Lower leg skin (tissue), 4 donors: ENCODE measurements at regions of chr15 and their contacts with region 1.

Region 1: GRCh38 chr15:83559310-83559966 is 94.5 kb upstream of the ADAMTSL3 start:
- DNase-seq: peak in 1 of 2 donors; percentile 51
- H3K4me3 ChIP-seq: no peak overlapping the region
- CTCF ChIP-seq: no peak
- POLR2A ChIP-seq: no peak

Region 2: GRCh38 chr15:83248151-83249029 is 311.0 kb before region 1 on chr15:
- intact Hi-C with region 1: loop called (anchors 5 kb)
- DNase-seq: peak in 1 of 2 donors; percentile 39
- H3K4me3 ChIP-seq: no peak overlapping the region
- CTCF ChIP-seq: peak in 2 of 3 donors; percentile 44 to 70
- POLR2A ChIP-seq: no peak

Region 3: GRCh38 chr15:83436458-83437158 is 122.8 kb before region 1 on chr15:
- intact Hi-C with region 1: loop called (anchors 2 kb)
- DNase-seq: no peak
- H3K4me3 ChIP-seq: no peak overlapping the region
- CTCF ChIP-seq: no peak
- POLR2A ChIP-seq: no peak

Region 4: DNA sequence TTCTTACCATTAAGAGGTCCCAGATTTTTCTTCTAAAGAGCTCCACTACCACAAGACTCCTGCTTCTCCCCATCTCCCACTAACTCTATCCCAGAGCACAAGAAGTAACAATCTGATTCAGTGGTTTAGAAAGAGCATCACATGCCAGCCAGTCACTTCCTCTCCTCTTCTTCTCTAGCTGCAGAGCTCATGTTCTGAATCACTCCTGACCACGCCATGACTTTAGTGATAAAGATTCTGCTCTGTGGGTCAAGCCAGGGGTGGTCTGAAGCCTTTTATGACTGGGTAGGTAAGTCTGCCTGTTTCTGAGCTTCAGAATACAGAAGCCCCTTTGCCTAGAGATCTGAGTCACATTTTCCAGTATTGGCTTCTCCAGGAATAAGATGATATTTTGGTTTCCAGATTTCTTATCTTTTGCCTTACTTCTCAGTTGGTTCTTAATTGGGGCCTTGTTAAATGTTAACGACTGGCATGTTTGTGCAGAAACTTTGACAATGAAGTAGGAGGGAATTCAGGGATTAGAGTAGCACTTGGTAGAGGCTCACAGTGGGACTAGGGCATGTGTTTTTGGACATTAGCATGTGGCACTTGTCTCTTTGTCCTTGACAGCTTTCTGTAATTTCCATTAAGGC is 66.8 kb after region 1 on chr15:
- intact Hi-C with region 1: no loop called
- DNase-seq: no peak
- H3K4me3 ChIP-seq: no peak overlapping the region
- CTCF ChIP-seq: no peak
- POLR2A ChIP-seq: no peak

Region 5: GRCh38 chr15:84142888-84143337 is 583.5 kb after region 1 on chr15:
- intact Hi-C with region 1: loop called (anchors 10 kb)
- DNase-seq: peak; percentile 82 to 88
- H3K4me3 ChIP-seq: no peak overlapping the region
- CTCF ChIP-seq: peak in 1 of 3 donors; percentile 53
- POLR2A ChIP-seq: no peak